Left ventricle myocardium superior (tissue), 1 donor: ENCODE measurements at regions of chr9 and their contacts with region 1.

Region 1: DNA sequence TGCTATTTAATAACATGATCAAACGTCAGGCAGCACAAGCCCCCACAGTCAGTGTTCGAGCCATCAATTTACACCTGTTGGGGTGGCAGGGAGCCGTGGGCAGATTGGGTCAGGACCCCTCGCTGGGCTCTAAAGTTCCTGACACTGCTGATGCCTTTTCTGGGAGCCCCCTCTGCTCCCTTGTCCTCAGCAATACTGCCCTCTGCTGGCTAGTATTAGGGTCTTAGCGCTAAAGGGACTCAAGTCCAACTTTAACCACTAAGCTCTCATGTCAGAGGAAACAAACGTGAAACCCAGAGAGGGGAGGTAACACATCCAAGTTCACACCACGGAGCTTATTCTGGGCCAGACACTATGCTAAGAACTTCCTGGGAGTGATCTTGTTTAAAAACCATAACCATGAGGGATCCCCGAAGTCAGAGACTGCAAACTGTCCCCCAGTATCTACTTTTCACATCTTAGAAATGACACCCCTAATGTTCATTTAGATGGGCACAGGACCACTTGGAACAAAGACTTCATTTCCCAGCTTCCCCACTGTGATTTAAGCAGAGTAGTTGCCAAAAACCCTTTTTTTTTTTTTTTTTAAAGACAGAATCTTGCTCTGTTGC is 20.4 kb downstream of the ANKS6 start:
- DNase-seq: no peak
- ATAC-seq: peak; percentile 50

Region 2: GRCh38 chr9:98315551-98316060 is 460.3 kb before region 1 on chr9:
- intact Hi-C with region 1: loop called (anchors 10 kb)
- DNase-seq: peak; percentile 78
- ATAC-seq: peak; percentile 95